ENCODE measurements at regions of chr1 and their contacts with region 1.

Region 1: DNA sequence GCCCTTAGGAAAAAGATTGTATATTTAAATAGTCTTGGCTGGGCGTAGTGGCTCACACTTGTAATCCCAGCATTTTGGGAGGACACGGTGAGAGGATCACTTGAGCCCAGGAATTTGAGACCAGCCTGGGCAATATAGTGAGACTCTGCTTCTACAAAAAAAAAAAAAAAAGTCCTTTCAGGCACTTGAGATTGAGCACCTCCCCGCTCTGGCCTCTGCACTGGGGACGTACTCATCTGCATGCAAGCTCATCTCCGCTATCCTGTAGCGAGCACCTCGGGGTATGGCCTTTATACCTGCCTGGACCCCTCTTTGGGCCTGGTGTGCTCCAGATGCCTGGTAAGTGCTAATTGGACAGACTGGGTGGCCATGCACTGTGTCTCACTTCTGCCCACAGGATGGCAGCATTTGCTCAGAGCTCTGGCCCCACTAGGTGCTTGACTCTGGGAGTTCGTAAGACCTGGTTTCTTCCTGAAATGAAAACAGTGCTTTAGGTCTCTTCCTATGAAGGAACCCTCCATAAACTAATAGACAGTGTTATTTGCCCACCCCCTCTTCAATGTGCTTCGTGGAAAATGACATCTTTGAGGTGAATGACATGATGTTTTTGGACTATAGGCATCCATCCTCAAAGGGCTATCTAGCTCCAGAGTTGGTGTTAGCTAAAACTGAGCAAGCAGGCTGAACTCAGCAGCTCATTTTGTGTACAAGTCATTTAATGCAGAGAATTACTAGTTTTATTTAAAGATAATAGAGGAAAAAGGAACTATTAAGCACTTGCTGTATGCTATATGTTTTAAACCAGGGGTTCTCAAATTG is 61.7 kb upstream of the ADAR start:
- DNase-seq: peak; percentile 61 to 88 (median 70)
- ATAC-seq: peak; percentile 100
- H3K4me3 ChIP-seq: no peak overlapping the region
- H3K4me3 Mint-ChIP-seq: no peak overlapping the region
- H3K27ac ChIP-seq: no peak overlapping the region
- H3K27ac Mint-ChIP-seq: no peak overlapping the region
- H3K4me1 ChIP-seq: no peaks in the 10 kb centered on the region
- H3K4me1 Mint-ChIP-seq: peaks cover 5% of the 10 kb centered on the region
- H3K27me3 ChIP-seq: no peaks in the 10 kb centered on the region
- H3K27me3 Mint-ChIP-seq: no peaks in the 10 kb centered on the region
- CTCF ChIP-seq: peak; percentile 83

Region 2: GRCh38 chr1:154607609-154608396 is 61.9 kb before region 1 on chr1 and contains the start of gene ADAR:
- CTCF ChIA-PET with region 1: interaction called, 3 read pairs
- POLR2A ChIA-PET with region 1: interaction called, 3 read pairs
- intact Hi-C with region 1: loop called in 1 of 2 experiments (anchors 1 kb)
- DNase-seq: peak; percentile 75 to 98 (median 88)
- ATAC-seq: peak; percentile 76
- H3K4me3 ChIP-seq: peak within 1 kb of the TSS; percentile 88
- H3K4me3 Mint-ChIP-seq: peak within 1 kb of the TSS; percentile 95
- H3K27ac ChIP-seq: peak within 1 kb of the TSS; percentile 88 to 95
- H3K27ac Mint-ChIP-seq: peak within 1 kb of the TSS; percentile 93
- H3K4me1 ChIP-seq: peaks cover 53% of the 10 kb centered on the region
- H3K4me1 Mint-ChIP-seq: peaks cover 86% of the 10 kb centered on the region
- H3K27me3 ChIP-seq: no peaks in the 10 kb centered on the region
- H3K27me3 Mint-ChIP-seq: no peaks in the 10 kb centered on the region
- CTCF ChIP-seq: no peak
- total RNA-seq, gene ADAR: 206 to 210 TPM

Region 3: GRCh38 chr1:154791292-154792166 is 121.9 kb after region 1 on chr1:
- CTCF ChIA-PET with region 1: interaction called, 9 read pairs
- POLR2A ChIA-PET with region 1: no interaction called
- intact Hi-C with region 1: loop called (anchors 1 to 10 kb)
- DNase-seq: peak; percentile 71 to 95 (median 82)
- ATAC-seq: peak; percentile 98
- H3K4me3 ChIP-seq: no peak overlapping the region
- H3K4me3 Mint-ChIP-seq: peak overlapping the region; percentile 70
- H3K27ac ChIP-seq: peak overlapping the region in 1 of 2 donors; percentile 51
- H3K27ac Mint-ChIP-seq: peak overlapping the region; percentile 71
- H3K4me1 ChIP-seq: peaks cover 26% of the 10 kb centered on the region
- H3K4me1 Mint-ChIP-seq: peaks cover 33% of the 10 kb centered on the region
- H3K27me3 ChIP-seq: no peaks in the 10 kb centered on the region
- H3K27me3 Mint-ChIP-seq: no peaks in the 10 kb centered on the region
- CTCF ChIP-seq: peak; percentile 38

Region 4: DNA sequence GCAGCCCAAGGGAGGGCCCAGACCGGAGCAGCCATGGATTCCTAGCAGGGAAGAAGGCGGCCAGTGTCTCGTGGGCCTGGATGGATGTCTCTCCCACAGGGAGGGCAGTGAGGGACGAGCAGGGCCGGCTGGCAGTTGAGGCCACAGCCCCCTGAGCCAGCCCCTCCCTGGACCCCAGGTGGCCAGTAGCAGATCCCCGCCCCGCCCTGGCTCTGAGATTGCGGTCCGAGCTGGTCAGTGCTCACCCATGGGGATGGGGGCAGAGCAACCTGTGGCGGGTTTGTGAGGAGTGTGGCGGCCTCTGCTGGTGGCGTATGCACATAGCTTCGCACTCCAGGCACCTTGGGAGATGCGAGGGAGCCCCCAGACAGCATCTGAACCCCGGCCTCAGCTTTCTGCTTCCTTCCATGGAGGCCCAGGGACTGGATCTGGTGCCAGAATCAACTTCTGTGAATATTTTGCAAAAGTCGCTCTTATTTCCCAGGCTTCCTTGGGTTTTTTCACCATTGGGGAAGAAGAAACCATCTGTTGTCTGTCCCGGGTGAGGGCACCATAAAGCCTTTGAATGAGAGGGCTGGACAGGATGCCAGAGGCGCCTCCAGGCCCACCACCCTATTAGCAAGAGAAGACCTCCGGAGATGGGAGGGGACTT is 208.8 kb after region 1 on chr1:
- CTCF ChIA-PET with region 1: interaction called, 18 read pairs
- POLR2A ChIA-PET with region 1: interaction called, 3 read pairs
- intact Hi-C with region 1: loop called (anchors 1 kb)
- DNase-seq: peak; percentile 54 to 82 (median 64)
- ATAC-seq: peak; percentile 91
- H3K4me3 ChIP-seq: no peak overlapping the region
- H3K4me3 Mint-ChIP-seq: no peak overlapping the region
- H3K27ac ChIP-seq: no peak overlapping the region
- H3K27ac Mint-ChIP-seq: no peak overlapping the region
- H3K4me1 ChIP-seq: no peaks in the 10 kb centered on the region
- H3K4me1 Mint-ChIP-seq: no peaks in the 10 kb centered on the region
- H3K27me3 ChIP-seq: no peaks in the 10 kb centered on the region
- H3K27me3 Mint-ChIP-seq: peaks cover 5% of the 10 kb centered on the region
- CTCF ChIP-seq: peak; percentile 91

Region 5: DNA sequence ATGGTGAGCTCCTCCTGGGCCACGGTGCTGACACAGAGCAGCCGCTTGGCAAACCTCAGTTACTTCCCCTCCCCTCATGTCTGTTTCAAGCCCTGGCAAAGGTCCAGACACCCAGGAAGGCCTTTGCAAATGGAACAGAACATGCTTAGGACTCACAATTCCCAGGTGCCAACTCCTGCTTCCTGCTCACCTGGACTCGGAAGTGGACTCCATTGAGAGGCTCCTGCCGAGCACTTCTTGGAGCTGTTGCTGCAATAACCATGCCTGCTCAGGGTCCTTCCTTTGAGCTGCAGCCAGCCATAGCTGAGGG is 353.2 kb after region 1 on chr1:
- CTCF ChIA-PET with region 1: interaction called, 7 read pairs
- POLR2A ChIA-PET with region 1: no interaction called
- intact Hi-C with region 1: loop called (anchors 5 to 10 kb)
- DNase-seq: peak in 1 of 14 experiments; percentile 18
- ATAC-seq: no peak
- H3K4me3 ChIP-seq: no peak overlapping the region
- H3K4me3 Mint-ChIP-seq: no peak overlapping the region
- H3K27ac ChIP-seq: no peak overlapping the region
- H3K27ac Mint-ChIP-seq: peak overlapping the region; percentile 68
- H3K4me1 ChIP-seq: peaks cover 27% of the 10 kb centered on the region
- H3K4me1 Mint-ChIP-seq: peaks cover 37% of the 10 kb centered on the region
- H3K27me3 ChIP-seq: no peaks in the 10 kb centered on the region
- H3K27me3 Mint-ChIP-seq: no peaks in the 10 kb centered on the region
- CTCF ChIP-seq: no peak

Region 6: DNA sequence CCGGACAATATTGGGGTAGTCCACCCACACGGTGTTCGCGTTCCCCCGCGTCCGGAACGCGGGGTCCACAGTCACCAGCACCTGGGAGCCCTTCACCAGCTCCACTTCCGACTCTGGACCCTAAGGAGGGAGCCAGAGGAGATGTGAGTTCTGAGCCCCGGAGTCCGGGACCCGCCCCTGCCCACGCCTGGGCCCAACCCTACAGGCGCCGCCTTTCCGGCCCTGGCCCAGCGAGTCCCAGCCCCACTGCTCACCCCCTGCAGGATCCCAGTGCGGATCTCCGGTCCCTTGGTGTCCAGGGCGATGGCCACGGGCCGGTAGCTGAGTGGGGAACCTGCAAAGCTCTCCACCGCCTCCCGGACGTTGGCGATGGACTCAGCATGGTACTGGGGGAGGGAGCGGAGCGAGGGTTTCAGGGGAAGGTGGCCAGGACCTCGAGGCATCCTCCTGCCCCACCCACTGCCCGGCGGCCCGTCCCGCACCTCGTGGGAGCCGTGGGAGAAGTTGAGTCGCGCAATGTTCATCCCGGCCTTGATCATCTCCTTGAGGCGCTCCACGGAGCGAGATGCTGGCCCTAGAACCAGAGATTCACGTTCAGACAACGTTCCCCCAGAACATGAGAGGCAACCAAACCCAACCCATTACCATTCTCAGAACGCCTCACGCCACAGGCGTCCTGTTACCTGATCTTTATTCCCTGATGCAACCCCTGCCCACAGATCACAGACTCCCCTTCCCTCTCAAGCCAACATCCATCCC is 625.7 kb after region 1 on chr1:
- CTCF ChIA-PET with region 1: no interaction called
- POLR2A ChIA-PET with region 1: no interaction called
- intact Hi-C with region 1: no loop called
- DNase-seq: no peak
- ATAC-seq: no peak
- H3K4me3 ChIP-seq: no peak overlapping the region
- H3K4me3 Mint-ChIP-seq: no peak overlapping the region
- H3K27ac ChIP-seq: no peak overlapping the region
- H3K27ac Mint-ChIP-seq: no peak overlapping the region
- H3K4me1 ChIP-seq: peaks cover 13% of the 10 kb centered on the region
- H3K4me1 Mint-ChIP-seq: no peaks in the 10 kb centered on the region
- H3K27me3 ChIP-seq: peaks cover 25 to 28% of the 10 kb centered on the region in 2 experiments
- H3K27me3 Mint-ChIP-seq: peaks cover 35% of the 10 kb centered on the region
- CTCF ChIP-seq: no peak

Measured in CD4-positive, alpha-beta T cell (primary cell).